Naive thymus-derived CD4-positive, alpha-beta T cell (primary cell): ENCODE measurements at regions of chr2 and their contacts with region 1.

Region 1: GRCh38 chr2:171160119-171160955 is at the start of gene TLK1:
- DNase-seq: peak; percentile 63 to 84 (median 81)
- ATAC-seq: peak; percentile 78
- H3K4me3 ChIP-seq: peak within 1 kb of the TSS; percentile 70
- H3K4me3 Mint-ChIP-seq: peak within 1 kb of the TSS; percentile 87 to 98 (median 96)
- H3K27ac ChIP-seq: peak within 1 kb of the TSS; percentile 99
- H3K27ac Mint-ChIP-seq: peak within 1 kb of the TSS; percentile 88 to 98 (median 97)
- H3K4me1 ChIP-seq: peaks cover 30 to 39% of the 10 kb centered on the region in 2 donors
- H3K4me1 Mint-ChIP-seq: peaks cover 49 to 70% (median 58%) of the 10 kb centered on the region in 7 donors
- H3K27me3 ChIP-seq: no peaks in the 10 kb centered on the region
- H3K27me3 Mint-ChIP-seq: no peaks in the 10 kb centered on the region
- total RNA-seq, gene TLK1: 96.9 to 191 (median 141) TPM

Region 2: GRCh38 chr2:170973492-170974303 is 186.6 kb before region 1 on chr2:
- CTCF ChIA-PET with region 1: interaction called, 50 read pairs
- POLR2A ChIA-PET with region 1: interaction called, 32 read pairs
- intact Hi-C with region 1: loop called (anchors 1 kb)
- DNase-seq: peak; percentile 86 to 96 (median 91)
- ATAC-seq: peak; percentile 99
- H3K4me3 ChIP-seq: peak overlapping the region; percentile 84
- H3K4me3 Mint-ChIP-seq: peak overlapping the region; percentile 51 to 87 (median 84)
- H3K27ac ChIP-seq: peak overlapping the region; percentile 67
- H3K27ac Mint-ChIP-seq: peak overlapping the region; percentile 33 to 90 (median 79)
- H3K4me1 ChIP-seq: peaks cover 4 to 11% of the 10 kb centered on the region in 2 donors
- H3K4me1 Mint-ChIP-seq: peaks cover 5 to 20% (median 10%) of the 10 kb centered on the region in 7 donors
- H3K27me3 ChIP-seq: no peaks in the 10 kb centered on the region
- H3K27me3 Mint-ChIP-seq: no peaks in the 10 kb centered on the region

Region 3: GRCh38 chr2:171042253-171042969 is 117.9 kb before region 1 on chr2:
- CTCF ChIA-PET with region 1: interaction called, 3 read pairs
- POLR2A ChIA-PET with region 1: interaction called, 6 read pairs
- intact Hi-C with region 1: loop called in 1 of 2 experiments (anchors 1 kb)
- DNase-seq: peak in 6 of 9 donors; percentile 30 to 55 (median 44)
- ATAC-seq: peak; percentile 42
- H3K4me3 ChIP-seq: no peak overlapping the region
- H3K4me3 Mint-ChIP-seq: peak overlapping the region in 9 of 10 donors; percentile 26 to 86 (median 59)
- H3K27ac ChIP-seq: peak overlapping the region; percentile 43
- H3K27ac Mint-ChIP-seq: peak overlapping the region; percentile 85 to 97 (median 95)
- H3K4me1 ChIP-seq: peaks cover 6 to 30% of the 10 kb centered on the region in 2 donors
- H3K4me1 Mint-ChIP-seq: peaks cover 23 to 51% (median 40%) of the 10 kb centered on the region in 7 donors
- H3K27me3 ChIP-seq: no peaks in the 10 kb centered on the region
- H3K27me3 Mint-ChIP-seq: no peaks in the 10 kb centered on the region

Region 4: DNA sequence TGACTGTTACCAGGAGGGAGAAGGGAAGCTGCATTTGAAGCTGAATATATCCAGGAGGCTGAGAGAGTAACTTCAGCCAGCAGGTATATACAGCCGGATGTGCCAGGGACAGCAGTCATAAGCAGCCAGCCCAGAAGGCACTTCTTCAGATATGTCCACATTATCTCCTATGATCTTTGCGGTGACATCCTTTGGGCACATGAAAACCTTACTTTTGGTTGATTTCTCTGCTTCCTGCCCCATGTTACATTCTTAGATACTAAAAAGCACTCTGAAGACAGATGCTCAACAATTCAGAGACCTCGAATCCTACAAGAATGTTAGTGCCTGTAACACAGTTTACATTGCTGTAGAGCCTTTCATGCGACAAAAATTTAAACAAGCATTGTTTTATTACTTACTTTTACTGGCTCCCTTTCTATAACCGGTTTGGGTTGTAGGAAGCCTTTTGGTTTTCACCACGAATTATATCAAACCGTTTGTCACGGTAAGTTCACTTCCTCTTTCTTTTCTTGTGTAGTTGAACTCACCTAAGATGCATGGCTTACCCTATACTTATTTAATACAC is 50.6 kb after region 1 on chr2:
- CTCF ChIA-PET with region 1: no interaction called
- POLR2A ChIA-PET with region 1: interaction called, 5 read pairs
- intact Hi-C with region 1: loop called (anchors 1 to 2 kb)
- DNase-seq: peak in 7 of 9 donors; percentile 47 to 74 (median 66)
- ATAC-seq: peak; percentile 91
- H3K4me3 ChIP-seq: peak overlapping the region; percentile 38
- H3K4me3 Mint-ChIP-seq: peak overlapping the region; percentile 34 to 83 (median 78)
- H3K27ac ChIP-seq: peak overlapping the region; percentile 63
- H3K27ac Mint-ChIP-seq: peak overlapping the region; percentile 30 to 93 (median 83)
- H3K4me1 ChIP-seq: peaks cover 5 to 9% of the 10 kb centered on the region in 2 donors
- H3K4me1 Mint-ChIP-seq: peaks cover 3 to 28% (median 27%) of the 10 kb centered on the region in 7 donors
- H3K27me3 ChIP-seq: no peaks in the 10 kb centered on the region
- H3K27me3 Mint-ChIP-seq: peaks cover 0 to 3% (median 0%) of the 10 kb centered on the region in 5 donors

Region 5: DNA sequence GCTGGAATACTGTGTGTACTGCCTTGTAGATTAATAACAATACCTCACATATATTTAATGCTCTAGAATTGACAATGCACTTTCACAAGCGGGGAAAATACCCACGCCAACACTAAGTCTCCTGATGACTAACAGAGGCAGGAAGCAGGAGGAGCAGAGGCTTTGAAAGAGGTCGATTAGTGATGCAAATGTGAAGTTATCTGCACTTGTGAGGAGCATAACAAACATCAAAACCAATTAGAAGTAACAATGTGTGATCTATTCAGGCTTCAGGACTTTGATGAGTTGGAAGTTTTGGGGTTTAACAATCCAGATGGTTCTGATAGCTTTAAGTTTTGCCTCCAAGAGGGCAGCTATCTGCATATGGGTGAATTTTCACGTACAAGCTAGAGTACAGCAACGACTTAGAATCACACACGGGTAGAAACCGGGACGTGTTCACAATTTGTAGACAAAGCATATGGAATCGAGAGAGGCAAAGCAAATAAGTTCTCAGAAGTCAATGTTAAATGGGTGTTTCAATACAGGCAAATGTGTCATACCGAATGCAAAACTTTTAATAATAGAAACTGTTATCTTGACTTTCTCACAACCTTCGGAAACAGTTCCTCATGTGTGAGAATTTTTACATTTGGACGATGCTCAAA is 158.9 kb after region 1 on chr2:
- CTCF ChIA-PET with region 1: no interaction called
- POLR2A ChIA-PET with region 1: interaction called, 3 read pairs
- intact Hi-C with region 1: loop called (anchors 1 to 5 kb)
- DNase-seq: peak in 8 of 9 donors; percentile 16 to 60 (median 40)
- ATAC-seq: peak; percentile 91
- H3K4me3 ChIP-seq: no peak overlapping the region
- H3K4me3 Mint-ChIP-seq: peak overlapping the region; percentile 38 to 79 (median 69)
- H3K27ac ChIP-seq: no peak overlapping the region
- H3K27ac Mint-ChIP-seq: peak overlapping the region; percentile 19 to 87 (median 63)
- H3K4me1 ChIP-seq: peaks cover 0 to 4% of the 10 kb centered on the region in 2 donors
- H3K4me1 Mint-ChIP-seq: peaks cover 12 to 52% (median 38%) of the 10 kb centered on the region in 7 donors
- H3K27me3 ChIP-seq: no peaks in the 10 kb centered on the region
- H3K27me3 Mint-ChIP-seq: no peaks in the 10 kb centered on the region

Region 6: DNA sequence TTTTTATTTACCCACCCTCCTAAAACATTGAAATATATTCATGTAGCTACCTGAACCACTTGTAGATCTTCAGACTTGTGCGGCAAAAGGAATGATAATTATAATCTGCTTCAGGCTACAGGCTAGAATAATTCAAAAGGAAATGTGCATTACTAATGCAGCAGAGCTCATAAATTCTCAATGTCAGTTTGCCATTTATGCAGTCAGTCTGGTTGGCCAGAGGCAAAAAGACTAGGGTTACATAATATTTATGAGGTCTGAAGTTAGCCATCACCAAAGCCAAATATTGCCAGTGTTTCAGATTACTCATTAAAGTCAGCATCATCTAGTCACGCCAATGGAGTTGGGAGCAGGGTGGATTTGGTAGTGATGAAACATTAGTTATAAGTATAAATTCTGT is 878.3 kb after region 1 on chr2:
- CTCF ChIA-PET with region 1: no interaction called
- POLR2A ChIA-PET with region 1: no interaction called
- intact Hi-C with region 1: no loop called
- DNase-seq: no peak
- ATAC-seq: no peak
- H3K4me3 ChIP-seq: no peak overlapping the region
- H3K4me3 Mint-ChIP-seq: no peak overlapping the region
- H3K27ac ChIP-seq: no peak overlapping the region
- H3K27ac Mint-ChIP-seq: no peak overlapping the region
- H3K4me1 ChIP-seq: no peaks in the 10 kb centered on the region
- H3K4me1 Mint-ChIP-seq: no peaks in the 10 kb centered on the region
- H3K27me3 ChIP-seq: no peaks in the 10 kb centered on the region
- H3K27me3 Mint-ChIP-seq: no peaks in the 10 kb centered on the region

Region 7: GRCh38 chr2:172442072-172442895 is 1281.9 kb after region 1 on chr2:
- CTCF ChIA-PET with region 1: no interaction called
- POLR2A ChIA-PET with region 1: no interaction called
- intact Hi-C with region 1: loop called in 1 of 2 experiments (anchors 5 kb)
- DNase-seq: peak in 3 of 9 donors; percentile 42 to 63 (median 46)
- ATAC-seq: peak; percentile 47
- H3K4me3 ChIP-seq: peak overlapping the region; percentile 46
- H3K4me3 Mint-ChIP-seq: peak overlapping the region in 9 of 10 donors; percentile 59 to 95 (median 91)
- H3K27ac ChIP-seq: peak overlapping the region; percentile 41
- H3K27ac Mint-ChIP-seq: peak overlapping the region in 8 of 9 donors; percentile 37 to 97 (median 90)
- H3K4me1 ChIP-seq: peaks cover 59 to 80% of the 10 kb centered on the region in 2 donors
- H3K4me1 Mint-ChIP-seq: peaks cover 33 to 79% (median 72%) of the 10 kb centered on the region in 7 donors
- H3K27me3 ChIP-seq: no peaks in the 10 kb centered on the region
- H3K27me3 Mint-ChIP-seq: peaks cover 0 to 31% (median 0%) of the 10 kb centered on the region in 5 donors